Panc1 (cell line): ENCODE measurements at regions of chr18 and their contacts with region 1.

Region 1: GRCh38 chr18:58768293-58768974 is 96.2 kb upstream of the ZNF532 start:
- DNase-seq: no peak
- ATAC-seq: peak; percentile 97
- H3K4me3 ChIP-seq: peak overlapping the region; percentile 26 to 37
- H3K27ac ChIP-seq: no peak overlapping the region
- H3K4me1 ChIP-seq: no peaks in the 10 kb centered on the region
- H3K27me3 ChIP-seq: no peaks in the 10 kb centered on the region
- CTCF ChIP-seq: peak; percentile 79

Region 2: GRCh38 chr18:58247363-58247834 is 521.0 kb before region 1 on chr18:
- CTCF ChIA-PET with region 1: no interaction called
- POLR2A ChIA-PET with region 1: no interaction called
- in situ Hi-C with region 1: no loop called
- intact Hi-C with region 1: no loop called
- DNase-seq: no peak
- ATAC-seq: no peak
- H3K4me3 ChIP-seq: no peak overlapping the region
- H3K27ac ChIP-seq: no peak overlapping the region
- H3K4me1 ChIP-seq: no peaks in the 10 kb centered on the region
- H3K27me3 ChIP-seq: no peaks in the 10 kb centered on the region
- CTCF ChIP-seq: no peak

Region 3: GRCh38 chr18:58727776-58728500 is 40.5 kb before region 1 on chr18:
- CTCF ChIA-PET with region 1: no interaction called
- POLR2A ChIA-PET with region 1: no interaction called
- in situ Hi-C with region 1: no loop called
- intact Hi-C with region 1: no loop called
- DNase-seq: no peak
- ATAC-seq: no peak
- H3K4me3 ChIP-seq: no peak overlapping the region
- H3K27ac ChIP-seq: no peak overlapping the region
- H3K4me1 ChIP-seq: no peaks in the 10 kb centered on the region
- H3K27me3 ChIP-seq: no peaks in the 10 kb centered on the region
- CTCF ChIP-seq: no peak

Region 4: DNA sequence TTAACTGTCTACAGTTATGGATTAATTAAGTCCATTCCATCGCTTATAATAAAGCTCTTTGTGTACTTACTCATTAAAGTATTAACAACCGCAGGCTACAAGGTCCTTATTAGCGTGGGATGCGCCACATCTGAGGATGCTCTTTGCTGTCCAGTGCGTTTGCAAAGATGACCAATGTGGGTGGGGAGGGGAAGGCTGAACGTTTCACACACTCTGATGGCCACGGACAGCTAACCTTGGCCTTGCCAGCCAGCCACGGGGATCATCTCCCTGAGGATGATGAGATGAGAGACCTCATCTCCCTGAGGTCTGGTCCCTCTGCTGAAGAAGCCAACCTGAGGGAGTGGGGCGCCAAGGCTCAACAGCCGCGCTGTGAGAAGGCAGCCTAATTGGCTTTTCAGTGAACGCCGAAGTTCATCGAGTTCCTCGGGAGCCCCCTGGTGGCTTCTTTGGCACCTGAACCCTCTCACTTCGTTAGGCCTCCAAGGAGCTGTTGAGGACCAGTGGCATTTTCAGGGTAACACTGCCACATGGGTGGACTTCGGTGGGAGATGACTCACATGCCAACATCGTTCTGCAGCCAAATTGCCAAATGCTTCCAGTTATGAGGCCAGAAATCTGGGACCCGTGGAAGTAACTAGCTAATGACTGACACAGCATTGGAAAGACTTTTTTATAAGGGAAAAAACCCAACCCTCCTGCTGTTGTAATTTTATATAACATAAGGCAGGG is 301.9 kb after region 1 on chr18:
- CTCF ChIA-PET with region 1: interaction called, 9 read pairs
- POLR2A ChIA-PET with region 1: no interaction called
- in situ Hi-C with region 1: no loop called
- intact Hi-C with region 1: loop called (anchors 2 kb)
- DNase-seq: peak; percentile 51
- ATAC-seq: peak; percentile 96
- H3K4me3 ChIP-seq: no peak overlapping the region
- H3K27ac ChIP-seq: peak overlapping the region; percentile 54
- H3K4me1 ChIP-seq: no peaks in the 10 kb centered on the region; the same call in 1 of the 2 replicates
- H3K27me3 ChIP-seq: no peaks in the 10 kb centered on the region
- CTCF ChIP-seq: peak; percentile 74

Region 5: GRCh38 chr18:59268721-59269562 is 500.5 kb after region 1 on chr18:
- CTCF ChIA-PET with region 1: no interaction called
- POLR2A ChIA-PET with region 1: no interaction called
- in situ Hi-C with region 1: no loop called
- intact Hi-C with region 1: no loop called
- DNase-seq: no peak
- ATAC-seq: peak; percentile 79
- H3K4me3 ChIP-seq: peak overlapping the region; percentile 27 to 37
- H3K27ac ChIP-seq: no peak overlapping the region
- H3K4me1 ChIP-seq: no peaks in the 10 kb centered on the region
- H3K27me3 ChIP-seq: peaks cover 17% of the 10 kb centered on the region
- CTCF ChIP-seq: peak; percentile 69